ENCODE measurements at regions of chr10 and their contacts with region 1.

Region 1: GRCh38 chr10:73886085-73886529 is 11.8 kb upstream of the CAMK2G start:
- DNase-seq: peak; percentile 72
- ATAC-seq: peak; percentile 96
- H3K4me3 Mint-ChIP-seq: no peak overlapping the region
- H3K27ac Mint-ChIP-seq: no peak overlapping the region
- H3K4me1 Mint-ChIP-seq: peaks cover 2% of the 10 kb centered on the region
- H3K27me3 Mint-ChIP-seq: no peaks in the 10 kb centered on the region
- CTCF ChIP-seq: peak; percentile 92

Region 2: GRCh38 chr10:73793461-73793860 is 92.6 kb before region 1 on chr10:
- CTCF ChIA-PET with region 1: no interaction called
- POLR2A ChIA-PET with region 1: no interaction called
- intact Hi-C with region 1: no loop called
- DNase-seq: no peak
- ATAC-seq: no peak
- H3K4me3 Mint-ChIP-seq: no peak overlapping the region
- H3K27ac Mint-ChIP-seq: no peak overlapping the region
- H3K4me1 Mint-ChIP-seq: no peaks in the 10 kb centered on the region
- H3K27me3 Mint-ChIP-seq: no peaks in the 10 kb centered on the region
- CTCF ChIP-seq: no peak

Region 3: DNA sequence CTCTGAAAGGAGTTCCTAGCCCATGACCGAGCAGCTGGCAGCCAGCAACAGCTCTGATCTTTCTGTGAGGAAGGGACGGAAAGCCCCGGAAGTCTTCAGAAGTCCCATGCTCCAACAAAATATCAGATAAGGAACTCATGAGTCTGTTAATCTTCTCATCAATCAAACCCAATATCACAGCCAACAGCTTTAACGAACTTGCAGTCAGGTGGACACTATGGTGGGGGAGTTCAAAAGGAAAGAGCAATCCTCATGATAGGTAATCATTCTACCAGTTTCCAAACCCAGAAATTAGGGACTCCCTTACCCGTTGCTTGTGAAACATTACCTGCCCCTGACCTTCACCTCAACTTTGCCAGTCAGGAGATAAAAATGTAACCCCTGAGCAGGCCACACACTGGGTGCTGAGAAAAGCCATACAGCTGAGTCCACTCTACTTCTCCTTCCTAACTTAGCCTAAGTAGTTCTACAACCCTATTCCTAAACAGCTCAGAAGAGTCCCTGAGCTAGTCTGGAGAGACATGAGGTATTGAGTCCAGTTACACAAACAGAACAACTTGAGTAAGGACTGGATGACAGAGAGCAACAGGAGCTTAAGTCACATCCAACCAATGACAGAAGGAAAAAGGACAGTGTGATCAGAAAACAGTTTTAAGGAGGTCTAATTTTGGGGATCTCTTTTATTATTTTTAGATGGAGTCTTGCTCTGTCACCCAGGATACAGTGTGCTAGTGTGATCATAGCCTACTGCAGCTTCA is 76.9 kb before region 1 on chr10:
- CTCF ChIA-PET with region 1: no interaction called
- POLR2A ChIA-PET with region 1: no interaction called
- intact Hi-C with region 1: no loop called
- DNase-seq: no peak
- ATAC-seq: no peak
- H3K4me3 Mint-ChIP-seq: peak overlapping the region; percentile 82
- H3K27ac Mint-ChIP-seq: peak overlapping the region; percentile 98
- H3K4me1 Mint-ChIP-seq: peaks cover 49% of the 10 kb centered on the region
- H3K27me3 Mint-ChIP-seq: no peaks in the 10 kb centered on the region
- CTCF ChIP-seq: no peak

Region 4: DNA sequence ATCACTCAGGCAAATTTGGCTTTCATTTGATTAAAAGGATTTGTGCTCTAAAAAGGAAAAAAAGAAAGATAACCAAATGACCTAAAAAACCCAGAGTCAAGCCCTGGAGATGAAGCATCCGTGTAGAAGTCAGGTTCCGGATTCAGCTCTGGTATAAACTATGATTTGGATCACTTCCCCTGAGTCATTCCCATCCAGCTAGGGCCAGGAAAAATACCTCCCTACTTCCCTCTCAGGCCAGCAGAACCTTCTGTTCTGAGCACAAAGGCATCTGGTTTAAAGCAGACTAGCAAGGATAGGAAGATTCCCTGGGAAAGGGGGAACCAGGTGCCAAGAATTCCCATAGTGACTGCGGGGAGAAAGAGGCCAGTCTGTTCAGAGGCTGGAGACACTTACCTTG is 49.0 kb before region 1 on chr10:
- CTCF ChIA-PET with region 1: interaction called, 430 read pairs
- POLR2A ChIA-PET with region 1: no interaction called
- intact Hi-C with region 1: no loop called
- DNase-seq: no peak
- ATAC-seq: no peak
- H3K4me3 Mint-ChIP-seq: no peak overlapping the region
- H3K27ac Mint-ChIP-seq: no peak overlapping the region
- H3K4me1 Mint-ChIP-seq: no peaks in the 10 kb centered on the region
- H3K27me3 Mint-ChIP-seq: no peaks in the 10 kb centered on the region
- CTCF ChIP-seq: no peak

Region 5: DNA sequence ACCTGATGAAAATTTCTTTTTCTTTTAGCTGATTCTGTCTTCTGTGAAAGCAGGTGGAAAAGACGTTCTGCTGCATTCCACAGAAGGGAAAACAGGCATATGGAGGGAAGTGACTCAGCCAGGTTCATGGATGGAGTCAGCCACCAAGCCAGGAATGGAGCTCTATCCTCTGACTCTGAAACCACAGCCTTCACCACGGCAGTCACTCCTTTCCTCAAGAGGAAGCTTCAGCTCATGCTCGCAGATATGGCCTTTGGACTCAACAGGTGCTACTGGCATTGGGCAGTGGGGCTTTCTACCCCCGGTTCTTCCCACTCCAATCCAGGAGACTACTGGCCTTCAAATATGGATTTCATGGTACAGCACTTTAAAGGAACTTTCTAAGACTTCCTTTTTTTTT is 13.3 kb after region 1 on chr10:
- CTCF ChIA-PET with region 1: interaction called, 30 read pairs
- POLR2A ChIA-PET with region 1: no interaction called
- intact Hi-C with region 1: no loop called
- DNase-seq: no peak
- ATAC-seq: no peak
- H3K4me3 Mint-ChIP-seq: no peak overlapping the region
- H3K27ac Mint-ChIP-seq: no peak overlapping the region
- H3K4me1 Mint-ChIP-seq: no peaks in the 10 kb centered on the region
- H3K27me3 Mint-ChIP-seq: peaks cover 19% of the 10 kb centered on the region
- CTCF ChIP-seq: no peak

Region 6: GRCh38 chr10:73926152-73926764 is 40.2 kb after region 1 on chr10:
- CTCF ChIA-PET with region 1: interaction called, 31 read pairs
- POLR2A ChIA-PET with region 1: no interaction called
- intact Hi-C with region 1: no loop called
- DNase-seq: no peak
- ATAC-seq: no peak
- H3K4me3 Mint-ChIP-seq: no peak overlapping the region
- H3K27ac Mint-ChIP-seq: no peak overlapping the region
- H3K4me1 Mint-ChIP-seq: peaks cover 15% of the 10 kb centered on the region
- H3K27me3 Mint-ChIP-seq: peaks cover 57% of the 10 kb centered on the region
- CTCF ChIP-seq: no peak

Region 7: GRCh38 chr10:73940634-73941221 is 54.6 kb after region 1 on chr10:
- CTCF ChIA-PET with region 1: interaction called, 466 read pairs
- POLR2A ChIA-PET with region 1: no interaction called
- intact Hi-C with region 1: loop called (anchors 2 kb)
- DNase-seq: peak; percentile 88
- ATAC-seq: peak; percentile 99
- H3K4me3 Mint-ChIP-seq: no peak overlapping the region
- H3K27ac Mint-ChIP-seq: no peak overlapping the region
- H3K4me1 Mint-ChIP-seq: peaks cover 5% of the 10 kb centered on the region
- H3K27me3 Mint-ChIP-seq: peaks cover 9% of the 10 kb centered on the region
- CTCF ChIP-seq: peak; percentile 99

Region 8: GRCh38 chr10:74081192-74081803 is 195.2 kb after region 1 on chr10:
- CTCF ChIA-PET with region 1: interaction called, 54 read pairs
- POLR2A ChIA-PET with region 1: interaction called, 3 read pairs
- intact Hi-C with region 1: loop called (anchors 5 kb)
- DNase-seq: peak; percentile 56
- ATAC-seq: peak; percentile 37
- H3K4me3 Mint-ChIP-seq: no peak overlapping the region
- H3K27ac Mint-ChIP-seq: no peak overlapping the region
- H3K4me1 Mint-ChIP-seq: peaks cover 40% of the 10 kb centered on the region
- H3K27me3 Mint-ChIP-seq: no peaks in the 10 kb centered on the region
- CTCF ChIP-seq: peak; percentile 71

Region 9: GRCh38 chr10:74624501-74624900 is 738.4 kb after region 1 on chr10:
- CTCF ChIA-PET with region 1: no interaction called
- POLR2A ChIA-PET with region 1: no interaction called
- intact Hi-C with region 1: no loop called
- DNase-seq: no peak
- ATAC-seq: no peak
- H3K4me3 Mint-ChIP-seq: no peak overlapping the region
- H3K27ac Mint-ChIP-seq: no peak overlapping the region
- H3K4me1 Mint-ChIP-seq: no peaks in the 10 kb centered on the region
- H3K27me3 Mint-ChIP-seq: no peaks in the 10 kb centered on the region
- CTCF ChIP-seq: no peak